Right ventricle myocardium inferior (tissue), 1 donor: ENCODE measurements at regions of chr1 and their contacts with region 1.

Region 1: DNA sequence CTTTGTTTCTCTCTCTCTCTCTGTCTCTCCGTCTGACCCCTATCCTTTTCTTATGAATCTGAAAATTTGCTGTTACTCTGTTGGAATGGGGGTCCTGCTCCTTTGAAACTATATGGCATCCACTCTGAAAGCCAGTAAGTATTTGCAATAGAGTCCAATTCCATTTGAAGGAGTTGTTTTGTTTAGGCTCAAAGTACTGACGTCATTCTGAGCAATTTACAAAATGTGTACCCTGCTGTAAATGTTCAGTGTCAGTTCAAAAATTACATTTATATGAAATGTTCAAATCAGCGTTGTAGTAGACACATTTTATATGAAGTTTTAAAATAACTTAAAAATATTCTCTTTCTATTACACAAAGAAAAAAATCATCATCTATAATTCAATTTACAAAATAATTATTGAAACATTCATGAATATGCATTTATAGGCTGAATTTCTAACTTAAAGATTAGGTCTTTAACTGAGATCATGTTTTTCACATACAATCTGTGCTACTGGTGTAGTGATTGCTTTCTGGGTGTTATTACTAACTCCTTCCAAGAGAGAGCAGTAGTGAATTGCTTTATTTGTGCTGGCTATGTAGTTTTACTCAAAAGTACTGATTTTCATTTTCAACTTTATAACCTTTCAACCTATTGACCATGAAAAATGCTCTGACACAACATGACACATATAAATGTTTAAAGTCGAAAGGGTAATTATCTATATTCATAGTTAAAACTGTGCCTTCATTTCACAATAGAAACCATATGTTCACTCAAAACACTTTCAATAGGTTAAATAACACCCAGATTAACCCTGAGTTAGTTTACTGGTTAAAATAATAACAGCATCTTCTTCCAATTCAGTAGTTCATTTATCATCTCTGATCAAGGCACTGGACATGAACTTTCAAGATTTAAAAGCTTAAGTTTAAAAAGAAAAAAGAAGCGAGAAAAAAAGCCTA is 253.1 kb upstream of the ADGRL4 start:
- DNase-seq: no peak
- ATAC-seq: no peak

Region 2: GRCh38 chr1:79190074-79190473 is 69.6 kb before region 1 on chr1:
- intact Hi-C with region 1: no loop called
- DNase-seq: no peak
- ATAC-seq: no peak

Region 3: GRCh38 chr1:79293611-79294010 is 33.9 kb after region 1 on chr1:
- intact Hi-C with region 1: no loop called
- DNase-seq: no peak
- ATAC-seq: no peak

Region 4: GRCh38 chr1:79353224-79353623 is 93.6 kb after region 1 on chr1:
- intact Hi-C with region 1: loop called (anchors 5 kb)
- DNase-seq: no peak
- ATAC-seq: peak; percentile 64